ENCODE measurements at regions of chr6 and their contacts with region 1.

Region 1: GRCh38 chr6:84428300-84428907 is 201.0 kb upstream of the CEP162 start:
- DNase-seq: peak; percentile 4
- H3K4me3 ChIP-seq: no peak overlapping the region
- CTCF ChIP-seq: peak; percentile 73

Region 2: DNA sequence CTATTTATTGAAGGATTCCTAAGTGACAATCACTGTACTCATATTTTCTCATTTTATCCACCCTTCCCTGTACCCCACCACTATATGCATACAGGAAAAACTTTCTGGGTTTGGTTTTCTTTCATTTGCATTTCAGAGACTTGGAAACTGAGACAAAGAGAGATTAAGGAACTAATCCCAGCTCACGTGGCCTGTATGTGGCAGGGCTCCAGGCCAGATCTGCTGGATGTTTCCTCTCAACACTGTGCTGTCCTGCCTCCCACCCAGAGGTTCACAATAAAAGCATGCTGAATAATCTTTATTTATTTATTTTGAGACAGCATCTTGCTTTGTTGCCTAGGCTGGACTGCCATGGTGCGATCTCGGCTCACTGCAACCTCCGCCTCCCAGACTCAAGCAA is 251.2 kb before region 1 on chr6:
- CTCF ChIA-PET with region 1: no interaction called
- POLR2A ChIA-PET with region 1: no interaction called
- DNase-seq: no peak
- H3K4me3 ChIP-seq: no peak overlapping the region
- CTCF ChIP-seq: no peak

Region 3: GRCh38 chr6:84411060-84411629 is 17.3 kb before region 1 on chr6:
- CTCF ChIA-PET with region 1: interaction called, 11 read pairs
- POLR2A ChIA-PET with region 1: no interaction called
- DNase-seq: peak; percentile 71
- H3K4me3 ChIP-seq: no peak overlapping the region
- CTCF ChIP-seq: no peak

Region 4: GRCh38 chr6:84445068-84445467 is 16.7 kb after region 1 on chr6:
- CTCF ChIA-PET with region 1: interaction called, 14 read pairs
- POLR2A ChIA-PET with region 1: no interaction called
- DNase-seq: no peak
- H3K4me3 ChIP-seq: no peak overlapping the region
- CTCF ChIP-seq: no peak

Region 5: GRCh38 chr6:84764332-84765049 is 336.1 kb after region 1 on chr6 and contains the start of gene TBX18:
- CTCF ChIA-PET with region 1: interaction called, 11 read pairs
- POLR2A ChIA-PET with region 1: interaction called, 3 read pairs
- DNase-seq: peak; percentile 95
- H3K4me3 ChIP-seq: peak within 1 kb of the TSS; percentile 79
- CTCF ChIP-seq: peak; percentile 31

Region 6: GRCh38 chr6:84779380-84779779 is 351.0 kb after region 1 on chr6:
- CTCF ChIA-PET with region 1: interaction called, 33 read pairs
- POLR2A ChIA-PET with region 1: no interaction called
- DNase-seq: no peak
- H3K4me3 ChIP-seq: no peak overlapping the region
- CTCF ChIP-seq: peak; percentile 14